IMR-90 (cell line): ENCODE measurements at regions of chr5 and their contacts with region 1.

Region 1: DNA sequence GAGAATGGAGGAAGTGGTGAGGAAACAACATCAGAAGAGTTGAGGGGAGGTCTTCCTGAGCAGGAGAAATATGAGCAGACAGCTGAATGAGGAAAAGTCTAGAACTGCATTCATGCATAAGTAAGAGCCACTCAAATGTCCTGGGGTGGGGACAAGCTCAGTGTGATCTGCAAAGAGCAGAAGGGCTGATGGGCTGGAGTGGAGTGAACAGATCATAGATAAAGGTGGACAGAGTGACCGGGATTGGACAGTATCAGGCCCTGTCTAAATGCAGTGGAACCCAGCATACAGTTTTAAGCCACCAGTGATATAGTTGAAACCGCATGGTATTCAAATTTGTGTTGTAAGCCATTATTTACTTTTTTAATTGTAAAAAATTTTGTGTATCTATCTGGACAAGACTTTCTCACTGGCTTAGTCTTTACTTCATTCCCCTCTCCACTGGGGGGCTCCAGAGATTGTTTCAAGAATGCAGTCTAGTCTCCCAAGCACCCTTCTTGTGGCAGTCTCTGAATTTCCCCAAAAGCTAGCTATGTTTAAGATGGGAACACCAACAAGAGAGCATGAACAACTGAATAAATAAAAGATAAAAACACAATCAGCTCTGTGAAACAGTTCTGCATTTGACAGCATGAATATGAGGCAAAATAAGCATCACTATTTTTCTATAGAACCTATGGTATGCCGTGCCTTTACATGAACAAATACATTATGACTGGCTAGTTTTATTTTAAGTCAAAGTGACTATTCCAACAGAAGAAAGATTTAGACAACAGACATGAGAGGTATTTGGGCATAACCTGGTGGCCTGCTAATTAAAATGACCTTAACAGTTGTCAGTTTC is 10.7 kb upstream of the STK32A start:
- DNase-seq: peak; percentile 42
- ATAC-seq: peak; percentile 84; the same call in 1 of the 2 replicates
- H3K4me3 ChIP-seq: no peak overlapping the region
- H3K27ac ChIP-seq: no peak overlapping the region
- H3K4me1 ChIP-seq: no peaks in the 10 kb centered on the region
- H3K27me3 ChIP-seq: no peaks in the 10 kb centered on the region; the same call in 1 of the 2 replicates
- CTCF ChIP-seq: peak; percentile 75
- POLR2A ChIP-seq: no peak
- RAD21 ChIP-seq: peak; percentile 84

Region 2: GRCh38 chr5:147346006-147346561 is 121.9 kb after region 1 on chr5:
- CTCF ChIA-PET with region 1: no interaction called
- POLR2A ChIA-PET with region 1: no interaction called
- dilution Hi-C with region 1: no loop called
- in situ Hi-C with region 1: no loop called
- intact Hi-C with region 1: no loop called
- DNase-seq: no peak
- ATAC-seq: no peak
- H3K4me3 ChIP-seq: no peak overlapping the region
- H3K27ac ChIP-seq: no peak overlapping the region
- H3K4me1 ChIP-seq: peaks cover 4% of the 10 kb centered on the region; the same call in 1 of the 2 replicates
- H3K27me3 ChIP-seq: peaks cover 5% of the 10 kb centered on the region
- CTCF ChIP-seq: no peak
- POLR2A ChIP-seq: no peak
- RAD21 ChIP-seq: no peak

Region 3: DNA sequence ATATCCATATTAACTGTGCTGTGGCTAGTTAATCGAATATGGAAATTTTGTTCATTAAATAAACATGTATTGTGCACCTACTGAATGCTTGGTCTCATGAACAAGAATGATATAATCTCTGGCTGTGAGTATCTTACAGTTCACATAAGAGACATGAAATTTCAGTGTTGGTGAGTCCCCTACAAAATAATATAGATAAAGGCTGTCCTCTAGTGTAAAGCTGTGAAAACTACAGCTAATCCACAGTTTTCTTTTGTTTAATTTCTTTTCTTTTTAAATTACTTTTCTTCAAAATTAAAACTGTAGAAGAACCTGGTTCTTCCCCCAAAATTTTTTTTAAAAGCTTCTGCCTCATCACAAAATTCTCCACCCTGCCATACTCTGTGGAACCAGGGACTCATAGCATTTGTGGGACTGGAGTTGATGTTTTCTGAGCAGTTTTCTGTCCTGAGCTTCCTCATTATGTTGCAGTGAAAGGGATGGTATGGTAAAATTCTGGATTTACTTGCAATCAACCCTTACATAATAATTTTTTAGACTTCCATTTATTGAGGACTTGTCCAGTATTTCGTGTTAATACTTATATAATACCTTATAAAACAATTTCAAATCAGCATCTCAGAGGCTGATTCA is 145.7 kb after region 1 on chr5:
- CTCF ChIA-PET with region 1: interaction called, 5 read pairs
- POLR2A ChIA-PET with region 1: no interaction called
- dilution Hi-C with region 1: no loop called
- in situ Hi-C with region 1: loop called (anchors 10 kb)
- intact Hi-C with region 1: loop called (anchors 1 kb)
- DNase-seq: peak; percentile 20
- ATAC-seq: peak; percentile 79
- H3K4me3 ChIP-seq: no peak overlapping the region
- H3K27ac ChIP-seq: no peak overlapping the region
- H3K4me1 ChIP-seq: peaks cover 2% of the 10 kb centered on the region; the same call in 1 of the 2 replicates
- H3K27me3 ChIP-seq: peaks cover 4% of the 10 kb centered on the region; the same call in 1 of the 2 replicates
- CTCF ChIP-seq: peak; percentile 68
- POLR2A ChIP-seq: no peak
- RAD21 ChIP-seq: peak; percentile 66

Region 4: GRCh38 chr5:147453875-147454814 is 230.0 kb after region 1 on chr5:
- CTCF ChIA-PET with region 1: no interaction called
- POLR2A ChIA-PET with region 1: no interaction called
- dilution Hi-C with region 1: no loop called
- in situ Hi-C with region 1: no loop called
- intact Hi-C with region 1: loop called (anchors 1 kb)
- DNase-seq: peak; percentile 85
- ATAC-seq: peak; percentile 89
- H3K4me3 ChIP-seq: peak overlapping the region; percentile 96
- H3K27ac ChIP-seq: peak overlapping the region; percentile 82
- H3K4me1 ChIP-seq: peaks cover 8% of the 10 kb centered on the region
- H3K27me3 ChIP-seq: no peaks in the 10 kb centered on the region; the same call in 1 of the 2 replicates
- CTCF ChIP-seq: peak; percentile 96
- POLR2A ChIP-seq: 0 out of 2 replicates have a peak, but pooled peaks have one; percentile 5
- RAD21 ChIP-seq: peak; percentile 84

Region 5: GRCh38 chr5:147558826-147559225 is 334.7 kb after region 1 on chr5:
- CTCF ChIA-PET with region 1: interaction called, 12 read pairs
- POLR2A ChIA-PET with region 1: no interaction called
- dilution Hi-C with region 1: no loop called
- in situ Hi-C with region 1: no loop called
- intact Hi-C with region 1: loop called (anchors 1 kb)
- DNase-seq: peak; percentile 81
- ATAC-seq: peak; percentile 81
- H3K4me3 ChIP-seq: no peak overlapping the region
- H3K27ac ChIP-seq: no peak overlapping the region
- H3K4me1 ChIP-seq: no peaks in the 10 kb centered on the region
- H3K27me3 ChIP-seq: peaks cover 2% of the 10 kb centered on the region
- CTCF ChIP-seq: peak; percentile 92
- POLR2A ChIP-seq: no peak
- RAD21 ChIP-seq: peak; percentile 94

Region 6: GRCh38 chr5:147822686-147823491 is 598.7 kb after region 1 on chr5:
- CTCF ChIA-PET with region 1: no interaction called
- POLR2A ChIA-PET with region 1: no interaction called
- dilution Hi-C with region 1: no loop called
- in situ Hi-C with region 1: no loop called
- intact Hi-C with region 1: loop called (anchors 10 kb)
- DNase-seq: peak; percentile 61
- ATAC-seq: peak; percentile 85
- H3K4me3 ChIP-seq: no peak overlapping the region
- H3K27ac ChIP-seq: no peak overlapping the region
- H3K4me1 ChIP-seq: no peaks in the 10 kb centered on the region
- H3K27me3 ChIP-seq: no peaks in the 10 kb centered on the region
- CTCF ChIP-seq: peak; percentile 93
- POLR2A ChIP-seq: 0 out of 2 replicates have a peak, but pooled peaks have one; percentile 20
- RAD21 ChIP-seq: peak; percentile 89